Activated B cell treated with CpG ODN at 0.5 μM for 24 hours (primary cell): ENCODE measurements at regions of chr11 and their contacts with region 1.

Region 1: DNA sequence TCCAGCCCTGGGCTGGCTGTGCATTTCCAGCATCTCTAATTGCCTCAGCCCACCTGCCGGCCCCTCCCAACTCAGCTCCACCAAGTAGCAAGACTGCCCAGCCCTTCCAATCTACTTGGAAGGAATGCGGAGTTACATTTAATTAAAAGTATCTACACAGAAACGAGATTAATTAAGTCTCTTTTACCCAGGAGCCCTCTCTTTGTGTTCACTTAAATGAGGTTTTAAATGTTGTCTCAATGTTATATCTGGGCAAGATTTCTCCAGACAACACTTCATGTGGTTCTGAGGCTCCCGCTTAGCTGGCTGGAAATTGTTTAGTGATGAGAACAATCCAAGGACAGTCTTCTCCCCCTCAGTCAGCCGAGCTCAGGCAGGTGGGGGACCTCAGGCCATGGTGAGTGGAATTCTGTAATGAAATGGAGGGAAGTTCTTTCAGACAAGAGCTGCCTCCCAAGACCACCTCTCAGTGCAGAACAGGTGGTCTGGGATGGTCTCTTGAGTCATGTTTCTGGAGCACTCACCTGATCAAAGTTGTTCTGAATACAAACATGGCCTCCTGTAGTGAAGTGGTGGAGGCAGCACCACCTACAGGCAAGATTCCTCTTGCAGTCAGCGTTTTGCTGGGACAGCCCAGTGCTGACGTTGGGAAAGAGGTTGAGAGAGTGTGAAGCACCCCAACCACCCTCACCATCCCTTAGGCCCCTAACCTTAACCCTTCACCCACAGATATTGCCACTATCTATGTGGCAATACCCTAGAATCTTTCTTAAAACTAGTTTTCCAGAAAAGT is 371.6 kb downstream of the CADM1 start:
- DNase-seq: no peak
- ATAC-seq: no peak
- H3K4me3 Mint-ChIP-seq: no peak overlapping the region
- H3K27ac Mint-ChIP-seq: no peak overlapping the region
- H3K4me1 Mint-ChIP-seq: no peaks in the 10 kb centered on the region
- H3K27me3 Mint-ChIP-seq: no peaks in the 10 kb centered on the region
- CTCF ChIP-seq: no peak

Region 2: GRCh38 chr11:114340311-114341131 is 792.1 kb before region 1 on chr11:
- CTCF ChIA-PET with region 1: no interaction called
- POLR2A ChIA-PET with region 1: no interaction called
- intact Hi-C with region 1: loop called (anchors 5 kb)
- DNase-seq: no peak
- ATAC-seq: peak; percentile 49
- H3K4me3 Mint-ChIP-seq: peak overlapping the region; percentile 42
- H3K27ac Mint-ChIP-seq: no peak overlapping the region
- H3K4me1 Mint-ChIP-seq: peaks cover 5% of the 10 kb centered on the region
- H3K27me3 Mint-ChIP-seq: peaks cover 3% of the 10 kb centered on the region
- CTCF ChIP-seq: peak; percentile 34

Region 3: GRCh38 chr11:114832532-114833125 is 300.0 kb before region 1 on chr11:
- CTCF ChIA-PET with region 1: no interaction called
- POLR2A ChIA-PET with region 1: no interaction called
- intact Hi-C with region 1: no loop called
- DNase-seq: no peak
- ATAC-seq: no peak
- H3K4me3 Mint-ChIP-seq: no peak overlapping the region
- H3K27ac Mint-ChIP-seq: no peak overlapping the region
- H3K4me1 Mint-ChIP-seq: no peaks in the 10 kb centered on the region
- H3K27me3 Mint-ChIP-seq: no peaks in the 10 kb centered on the region
- CTCF ChIP-seq: no peak

Region 4: DNA sequence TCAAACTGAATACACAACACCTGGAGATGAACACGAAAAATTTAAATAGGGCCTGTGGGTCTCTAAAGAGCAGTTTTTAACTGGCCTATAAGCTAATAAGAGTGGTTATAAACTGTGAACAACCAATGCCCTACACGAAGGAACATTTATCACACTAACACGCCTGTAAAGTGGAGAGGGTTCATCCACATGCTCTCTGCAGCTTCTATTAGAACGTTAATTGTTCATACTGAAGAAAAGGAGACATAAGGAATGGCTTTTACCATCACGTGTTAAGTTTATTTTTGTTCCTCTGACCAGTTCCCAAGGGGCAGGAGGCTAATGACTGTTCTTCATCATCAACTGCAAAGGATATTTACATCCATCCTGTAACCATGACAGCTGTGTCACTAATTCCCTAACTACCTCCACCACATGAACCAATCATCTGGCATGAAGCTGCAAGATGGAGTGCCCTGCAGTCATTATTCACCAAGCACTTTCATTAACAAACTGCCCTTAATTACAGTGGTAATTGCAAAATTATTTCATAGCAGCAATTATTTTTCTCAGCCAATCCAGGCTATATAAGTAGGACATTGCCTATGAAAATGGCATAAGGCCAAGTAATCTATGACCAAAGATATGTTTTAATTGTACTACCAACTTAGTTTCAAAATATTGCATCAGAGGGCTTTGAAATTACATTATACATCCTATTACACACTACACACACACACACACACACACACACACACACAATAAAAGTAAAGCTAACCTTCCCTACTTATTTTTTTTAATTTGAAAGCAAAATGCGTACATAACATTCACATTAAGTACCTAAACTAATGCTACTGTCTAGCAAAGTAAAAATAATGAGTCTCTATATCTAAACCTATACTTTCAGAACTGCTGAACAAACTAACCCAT is 184.9 kb after region 1 on chr11:
- CTCF ChIA-PET with region 1: no interaction called
- POLR2A ChIA-PET with region 1: no interaction called
- intact Hi-C with region 1: no loop called
- DNase-seq: no peak
- ATAC-seq: no peak
- H3K4me3 Mint-ChIP-seq: no peak overlapping the region
- H3K27ac Mint-ChIP-seq: no peak overlapping the region
- H3K4me1 Mint-ChIP-seq: no peaks in the 10 kb centered on the region
- H3K27me3 Mint-ChIP-seq: peaks cover 5% of the 10 kb centered on the region
- CTCF ChIP-seq: no peak